ENCODE measurements at regions of chr12 and their contacts with region 1.

Region 1: DNA sequence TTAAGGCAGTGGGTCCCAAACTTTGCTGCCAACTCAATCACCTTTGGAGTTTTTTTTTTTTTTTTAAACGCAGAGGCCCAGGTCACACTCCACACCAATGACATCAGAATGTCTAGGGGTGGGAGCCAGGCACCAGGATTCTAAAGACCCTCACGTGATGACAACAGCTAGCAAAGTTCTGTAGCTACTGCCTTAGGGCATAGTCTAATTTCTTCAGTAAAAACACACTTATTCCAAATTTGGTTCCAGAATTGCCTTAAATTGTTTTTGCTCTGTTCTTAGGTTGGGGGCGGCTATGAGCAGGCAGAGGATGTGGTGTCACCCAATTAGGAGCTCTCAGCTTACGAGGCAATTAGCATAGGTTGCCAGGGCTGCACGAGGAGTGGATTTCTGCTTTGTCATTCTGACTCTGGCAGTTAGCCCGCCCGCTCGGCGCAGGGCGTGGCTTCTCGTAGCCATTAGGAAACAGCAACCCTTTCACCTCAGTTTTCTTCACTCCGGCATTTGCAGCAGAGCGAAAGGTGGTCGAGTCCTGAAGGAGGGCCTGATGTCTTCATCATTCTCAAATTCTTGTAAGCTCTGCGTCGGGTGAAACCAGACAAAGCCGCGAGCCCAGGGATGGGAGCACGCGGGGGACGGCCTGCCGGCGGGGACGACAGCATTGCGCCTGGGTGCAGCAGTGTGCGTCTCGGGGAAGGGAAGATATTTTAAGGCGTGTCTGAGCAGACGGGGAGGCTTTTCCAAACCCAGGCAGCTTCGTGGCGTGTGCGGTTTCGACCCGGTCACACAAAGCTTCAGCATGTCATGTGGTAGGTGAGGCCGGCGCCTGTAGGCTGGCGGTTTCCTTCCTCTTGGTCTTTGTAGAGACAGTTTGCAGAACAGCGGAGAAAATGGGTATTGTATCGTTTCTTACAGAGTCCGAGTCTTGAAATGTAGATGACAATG is 16.7 kb upstream of the EID3 start:
- DNase-seq: peak; percentile 90
- CTCF ChIP-seq: no peak

Region 2: DNA sequence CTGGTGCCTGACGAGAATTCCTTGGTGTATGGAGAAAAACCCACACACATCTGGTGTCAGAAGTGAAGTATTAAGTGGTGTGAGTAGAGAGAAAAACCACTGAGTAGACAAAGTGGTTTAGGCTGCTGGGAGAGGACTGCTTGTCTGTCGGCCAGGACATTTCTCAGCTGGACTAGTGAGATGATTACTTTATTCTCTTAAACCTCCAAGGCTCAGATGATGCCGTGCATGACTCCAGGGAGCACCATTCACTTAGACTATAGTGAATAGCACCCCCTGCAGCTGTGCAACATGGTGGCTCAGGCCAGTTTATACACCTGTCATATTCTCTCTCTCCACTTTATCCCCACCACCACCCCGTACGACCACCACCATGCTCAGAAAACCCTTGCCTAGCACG is 120.3 kb before region 1 on chr12:
- CTCF ChIA-PET with region 1: no interaction called
- POLR2A ChIA-PET with region 1: no interaction called
- DNase-seq: no peak
- CTCF ChIP-seq: no peak

Region 3: GRCh38 chr12:104276273-104277131 is 10.3 kb before region 1 on chr12:
- CTCF ChIA-PET with region 1: interaction called, 30 read pairs
- POLR2A ChIA-PET with region 1: interaction called, 19 read pairs
- DNase-seq: peak; percentile 50
- CTCF ChIP-seq: no peak

Region 4: DNA sequence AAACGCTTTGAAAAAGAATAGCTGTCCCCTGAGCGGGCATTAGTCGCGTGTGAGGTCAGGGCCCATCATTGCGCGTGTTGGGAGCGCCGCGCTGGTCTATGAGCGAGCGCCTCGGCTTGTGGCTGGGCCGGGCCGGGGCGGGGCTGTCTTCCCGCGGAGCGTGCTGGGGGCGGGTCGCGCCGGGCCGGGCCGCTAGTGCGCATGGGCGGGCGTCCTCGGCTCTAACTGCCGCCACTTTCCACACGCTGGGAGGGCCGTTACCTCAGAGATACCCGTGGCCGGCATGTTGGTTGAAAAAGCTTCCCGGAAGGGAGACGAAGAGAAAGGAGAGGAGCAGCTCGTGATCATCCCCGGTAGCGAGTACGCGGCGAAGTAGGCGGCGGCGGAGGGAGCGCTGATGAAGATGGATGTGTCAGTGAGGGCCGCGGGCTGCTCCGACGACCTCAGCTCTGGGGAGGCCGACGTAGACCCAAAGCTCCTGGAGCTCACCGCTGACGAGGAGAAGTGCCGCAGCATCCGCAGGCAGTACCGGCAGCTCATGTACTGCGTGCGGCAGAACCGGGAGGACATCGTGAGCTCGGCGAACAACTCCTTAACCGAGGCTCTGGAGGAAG is 16.8 kb after region 1 on chr12 and contains the start of gene EID3:
- CTCF ChIA-PET with region 1: interaction called, 11 read pairs
- POLR2A ChIA-PET with region 1: interaction called, 8 read pairs
- DNase-seq: peak; percentile 93
- CTCF ChIP-seq: no peak

Region 5: GRCh38 chr12:104399740-104400612 is 113.2 kb after region 1 on chr12:
- CTCF ChIA-PET with region 1: no interaction called
- POLR2A ChIA-PET with region 1: no interaction called
- DNase-seq: no peak
- CTCF ChIP-seq: no peak